K562 (cell line): ENCODE measurements at regions of chr2 and their contacts with region 1.

Region 1: GRCh38 chr2:171598713-171599319 is 76.5 kb downstream of the CYBRD1 start:
- DNase-seq: peak; percentile 79 to 82 (median 81)
- ATAC-seq: peak; percentile 99
- H3K4me3 ChIP-seq: no peak overlapping the region
- H3K27ac ChIP-seq: no peak overlapping the region
- H3K4me1 ChIP-seq: no peaks in the 10 kb centered on the region
- H3K27me3 ChIP-seq: peaks cover 15 to 17% of the 10 kb centered on the region in 2 experiments; a peak in 4 of 5 replicates
- CTCF ChIP-seq: peak; percentile 76 to 90 (median 88)
- EP300 ChIP-seq: no peak
- POLR2A ChIP-seq: no peak
- RAD21 ChIP-seq: peak; percentile 70 to 89

Region 2: GRCh38 chr2:171347591-171348032 is 251.2 kb before region 1 on chr2:
- CTCF ChIA-PET with region 1: no interaction called
- POLR2A ChIA-PET with region 1: no interaction called
- in situ Hi-C with region 1: no loop called
- intact Hi-C with region 1: no loop called
- DNase-seq: no peak
- ATAC-seq: peak; percentile 33
- H3K4me3 ChIP-seq: no peak overlapping the region
- H3K27ac ChIP-seq: no peak overlapping the region
- H3K4me1 ChIP-seq: peaks cover 0 to 4% of the 10 kb centered on the region in 2 experiments; a peak in 1 of 5 replicates
- H3K27me3 ChIP-seq: no peaks in the 10 kb centered on the region
- CTCF ChIP-seq: no peak
- EP300 ChIP-seq: no peak
- POLR2A ChIP-seq: no peak
- RAD21 ChIP-seq: no peak

Region 3: GRCh38 chr2:171509945-171510731 is 88.7 kb before region 1 on chr2:
- CTCF ChIA-PET with region 1: no interaction called
- POLR2A ChIA-PET with region 1: no interaction called
- in situ Hi-C with region 1: no loop called
- intact Hi-C with region 1: no loop called
- DNase-seq: no peak
- ATAC-seq: no peak
- H3K4me3 ChIP-seq: no peak overlapping the region
- H3K27ac ChIP-seq: no peak overlapping the region
- H3K4me1 ChIP-seq: peaks cover 9 to 37% of the 10 kb centered on the region in 2 experiments; a peak in 3 of 5 replicates
- H3K27me3 ChIP-seq: no peaks in the 10 kb centered on the region
- CTCF ChIP-seq: no peak
- EP300 ChIP-seq: no peak
- POLR2A ChIP-seq: no peak
- RAD21 ChIP-seq: no peak

Region 4: DNA sequence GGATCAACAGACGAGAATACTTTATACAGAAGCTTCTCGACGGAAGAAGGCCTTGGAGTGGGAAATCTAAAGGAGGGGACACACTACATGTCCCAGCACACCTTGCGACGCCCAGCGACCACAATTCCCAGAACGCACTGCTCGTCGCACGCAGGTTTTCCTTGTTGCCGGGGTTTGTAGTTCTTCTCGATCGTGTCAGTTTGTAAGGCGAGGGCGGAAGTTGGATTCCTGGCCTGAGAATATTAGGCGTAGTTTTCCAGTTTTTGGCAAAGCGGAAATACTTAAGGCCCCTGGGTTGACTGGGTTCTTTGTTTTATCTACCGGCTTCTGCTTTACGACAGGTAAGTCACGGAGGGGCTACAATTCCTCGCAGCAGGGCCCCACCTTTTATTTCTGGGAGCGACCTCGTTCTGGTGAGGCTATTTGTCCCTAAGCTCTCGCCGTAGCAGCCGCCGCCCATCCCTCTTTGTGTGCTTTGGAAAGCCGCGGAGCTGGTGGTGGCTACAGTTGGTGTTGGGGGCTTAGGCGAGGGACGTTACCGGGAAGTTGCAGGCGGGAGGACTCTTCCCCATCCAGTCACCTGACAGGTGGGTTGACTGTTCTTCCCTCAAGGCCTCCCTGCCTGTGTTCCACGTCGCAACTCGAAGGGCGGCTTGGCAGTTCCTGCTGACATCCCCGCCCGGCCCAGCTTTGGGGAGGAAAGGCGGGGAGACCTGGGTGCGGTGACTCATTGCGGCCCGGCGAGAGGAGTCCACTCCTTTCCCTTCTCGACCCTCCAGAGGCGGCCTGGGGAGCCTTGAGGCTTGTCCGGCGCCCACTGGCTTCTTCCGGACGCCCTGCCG is 88.7 kb after region 1 on chr2 and contains the start of gene DYNC1I2:
- CTCF ChIA-PET with region 1: no interaction called
- POLR2A ChIA-PET with region 1: interaction called, 3 read pairs
- in situ Hi-C with region 1: no loop called
- intact Hi-C with region 1: loop called (anchors 5 kb)
- DNase-seq: peak; percentile 87 to 97 (median 88)
- ATAC-seq: peak; percentile 96
- H3K4me3 ChIP-seq: peak within 1 kb of the TSS; percentile 77
- H3K27ac ChIP-seq: peak within 1 kb of the TSS; percentile 88
- H3K4me1 ChIP-seq: peaks cover 0 to 8% of the 10 kb centered on the region in 2 experiments; a peak in 3 of 5 replicates
- H3K27me3 ChIP-seq: no peaks in the 10 kb centered on the region
- CTCF ChIP-seq: no peak; a peak in 1 of 6 replicates
- EP300 ChIP-seq: peak; percentile 5; the same call in 1 of the 2 replicates
- POLR2A ChIP-seq: peak; percentile 90
- RAD21 ChIP-seq: no peak; a peak in 1 of 4 replicates
- polyA plus RNA-seq, gene DYNC1I2: 59.1 to 119 TPM

Region 5: GRCh38 chr2:171798252-171798741 is 199.5 kb after region 1 on chr2:
- CTCF ChIA-PET with region 1: no interaction called
- POLR2A ChIA-PET with region 1: no interaction called
- in situ Hi-C with region 1: no loop called
- intact Hi-C with region 1: loop called (anchors 5 kb)
- DNase-seq: no peak
- ATAC-seq: peak; percentile 65
- H3K4me3 ChIP-seq: no peak overlapping the region
- H3K27ac ChIP-seq: peak overlapping the region; percentile 26; the same call in 1 of the 3 replicates
- H3K4me1 ChIP-seq: no peaks in the 10 kb centered on the region
- H3K27me3 ChIP-seq: no peaks in the 10 kb centered on the region
- CTCF ChIP-seq: no peak
- EP300 ChIP-seq: no peak
- POLR2A ChIP-seq: no peak
- RAD21 ChIP-seq: peak in 1 of 2 experiments; percentile 16; a peak in 1 of 4 replicates

Region 6: GRCh38 chr2:172113617-172114016 is 514.8 kb after region 1 on chr2:
- CTCF ChIA-PET with region 1: no interaction called
- POLR2A ChIA-PET with region 1: no interaction called
- in situ Hi-C with region 1: no loop called
- intact Hi-C with region 1: loop called (anchors 5 kb)
- DNase-seq: peak; percentile 39 to 70 (median 48)
- ATAC-seq: peak; percentile 92
- H3K4me3 ChIP-seq: no peak overlapping the region
- H3K27ac ChIP-seq: no peak overlapping the region
- H3K4me1 ChIP-seq: peaks cover 0 to 5% of the 10 kb centered on the region in 2 experiments; a peak in 1 of 5 replicates
- H3K27me3 ChIP-seq: peaks cover 2 to 6% of the 10 kb centered on the region in 2 experiments; a peak in 3 of 5 replicates
- CTCF ChIP-seq: peak; percentile 57 to 82 (median 73); a peak in 5 of 6 replicates
- EP300 ChIP-seq: no peak
- POLR2A ChIP-seq: no peak
- RAD21 ChIP-seq: peak; percentile 85 to 97

Region 7: DNA sequence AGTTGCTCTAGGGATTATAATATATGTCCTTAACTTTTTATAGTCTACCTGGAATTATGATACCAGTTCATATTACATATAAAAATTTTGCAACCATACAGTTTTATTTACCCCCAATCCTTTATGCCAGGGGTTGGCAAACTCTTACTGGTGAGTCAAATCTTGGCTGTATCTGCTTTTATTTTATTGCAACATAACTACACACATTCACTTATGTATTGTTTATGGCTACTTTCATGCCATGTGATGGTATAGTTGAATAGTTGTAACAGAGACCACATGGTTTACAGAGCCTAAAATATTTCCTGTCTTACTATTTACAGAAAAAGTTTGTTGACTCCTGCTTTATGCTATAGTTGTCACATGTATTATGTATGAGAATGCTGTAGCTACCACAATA is 529.7 kb after region 1 on chr2:
- CTCF ChIA-PET with region 1: interaction called, 3 read pairs
- POLR2A ChIA-PET with region 1: no interaction called
- in situ Hi-C with region 1: no loop called
- intact Hi-C with region 1: loop called (anchors 5 kb)
- DNase-seq: no peak
- ATAC-seq: no peak
- H3K4me3 ChIP-seq: no peak overlapping the region
- H3K27ac ChIP-seq: no peak overlapping the region
- H3K4me1 ChIP-seq: no peaks in the 10 kb centered on the region
- H3K27me3 ChIP-seq: peaks cover 2 to 5% of the 10 kb centered on the region in 2 experiments; a peak in 1 of 5 replicates
- CTCF ChIP-seq: no peak
- EP300 ChIP-seq: no peak
- POLR2A ChIP-seq: no peak
- RAD21 ChIP-seq: no peak